Calu3 (cell line): ENCODE measurements at regions of chr15 and their contacts with region 1.

Region 1: DNA sequence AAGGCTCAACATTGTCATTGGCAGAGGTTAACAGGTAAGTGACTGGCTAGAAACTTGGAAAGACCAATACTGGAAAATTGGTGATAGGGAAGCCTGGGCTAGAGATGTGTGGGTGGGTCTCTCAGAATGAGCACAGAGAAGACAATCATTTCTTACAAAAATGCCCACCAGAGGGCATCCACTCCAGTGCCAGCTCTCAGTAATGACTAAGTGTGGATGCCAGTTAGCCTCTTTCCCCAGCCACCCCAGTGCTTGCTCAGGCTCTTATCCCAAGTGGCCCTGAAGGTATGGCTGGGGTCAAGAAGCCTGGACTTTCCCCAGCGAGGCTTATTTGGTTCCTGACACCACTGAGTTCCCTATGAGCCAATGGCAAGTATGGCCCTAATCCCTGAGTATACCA is 115.9 kb upstream of the ST8SIA2 start:
- DNase-seq: peak; percentile 38
- H3K4me3 Mint-ChIP-seq: no peak overlapping the region
- H3K27ac Mint-ChIP-seq: no peak overlapping the region
- H3K4me1 Mint-ChIP-seq: no peaks in the 10 kb centered on the region
- H3K27me3 Mint-ChIP-seq: peaks cover 40% of the 10 kb centered on the region
- CTCF ChIP-seq: peak; percentile 40

Region 2: DNA sequence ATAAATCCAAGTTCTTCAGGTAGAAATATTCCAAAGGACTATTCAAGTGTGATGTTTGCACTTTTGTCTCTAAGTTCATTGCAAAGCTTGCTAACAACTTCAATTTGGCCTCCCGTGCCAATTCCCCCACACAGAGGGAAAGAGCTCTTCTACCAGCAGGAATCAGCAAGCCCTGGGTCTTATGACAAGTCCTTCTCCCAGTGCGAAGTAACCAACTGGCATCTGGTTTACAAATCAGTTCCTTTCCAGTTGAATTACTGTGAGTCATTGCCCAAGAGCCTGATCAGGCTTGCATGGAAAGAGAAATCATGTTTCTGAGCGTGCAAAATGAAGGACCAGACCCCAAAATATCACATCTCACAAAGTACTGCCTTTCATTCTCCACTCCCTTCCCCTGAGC is 486.9 kb before region 1 on chr15:
- CTCF ChIA-PET with region 1: no interaction called
- intact Hi-C with region 1: no loop called
- DNase-seq: no peak
- H3K4me3 Mint-ChIP-seq: no peak overlapping the region
- H3K27ac Mint-ChIP-seq: no peak overlapping the region
- H3K4me1 Mint-ChIP-seq: no peaks in the 10 kb centered on the region
- H3K27me3 Mint-ChIP-seq: peaks cover 25% of the 10 kb centered on the region
- CTCF ChIP-seq: no peak

Region 3: GRCh38 chr15:92247649-92248242 is 30.0 kb before region 1 on chr15:
- CTCF ChIA-PET with region 1: no interaction called
- intact Hi-C with region 1: loop called (anchors 1 kb)
- DNase-seq: no peak
- H3K4me3 Mint-ChIP-seq: no peak overlapping the region
- H3K27ac Mint-ChIP-seq: no peak overlapping the region
- H3K4me1 Mint-ChIP-seq: no peaks in the 10 kb centered on the region
- H3K27me3 Mint-ChIP-seq: peaks cover 51% of the 10 kb centered on the region
- CTCF ChIP-seq: no peak

Region 4: DNA sequence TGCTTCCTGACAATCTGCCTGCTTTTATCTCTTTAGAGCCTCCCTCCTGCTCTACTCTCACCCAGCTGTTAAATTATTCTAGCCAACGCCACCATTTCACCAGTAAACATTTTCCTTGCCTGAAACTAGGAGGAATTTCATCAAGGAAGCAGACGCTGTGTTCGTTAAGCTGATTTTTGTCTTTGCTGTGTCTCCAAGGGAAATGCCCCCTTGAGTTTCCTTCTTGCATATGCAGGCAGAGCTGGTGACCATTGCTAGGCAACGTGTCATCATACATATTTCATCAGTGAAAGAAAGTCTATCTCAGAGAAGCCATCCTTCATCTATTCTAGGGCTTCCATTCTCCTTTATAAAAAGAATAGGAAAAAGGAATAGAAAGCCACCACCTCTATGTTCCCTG is 28.9 kb after region 1 on chr15:
- CTCF ChIA-PET with region 1: interaction called, 10 read pairs
- intact Hi-C with region 1: no loop called
- DNase-seq: no peak
- H3K4me3 Mint-ChIP-seq: no peak overlapping the region
- H3K27ac Mint-ChIP-seq: no peak overlapping the region
- H3K4me1 Mint-ChIP-seq: no peaks in the 10 kb centered on the region
- H3K27me3 Mint-ChIP-seq: peaks cover 39% of the 10 kb centered on the region
- CTCF ChIP-seq: peak; percentile 16

Region 5: DNA sequence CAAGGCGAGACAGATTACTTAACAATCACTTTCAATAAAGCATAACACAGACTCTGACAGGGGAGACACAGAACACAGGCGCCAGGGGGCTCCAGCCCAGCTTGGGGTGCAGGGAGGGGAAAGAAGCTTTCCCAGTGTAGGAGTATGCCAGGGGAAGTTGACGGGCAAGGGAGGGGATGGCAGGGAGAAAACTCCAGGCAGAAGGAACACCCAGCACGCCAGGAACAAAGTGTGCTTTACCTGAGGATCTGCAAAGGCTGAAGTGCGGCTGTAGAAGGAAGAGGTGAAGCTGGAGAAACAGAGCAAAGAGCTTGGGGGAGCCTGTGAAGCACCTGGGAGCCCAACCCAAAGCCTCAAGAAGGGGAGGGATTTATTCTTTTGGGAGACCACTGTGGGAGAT is 799.1 kb after region 1 on chr15:
- CTCF ChIA-PET with region 1: no interaction called
- intact Hi-C with region 1: loop called (anchors 5 kb)
- DNase-seq: no peak
- H3K4me3 Mint-ChIP-seq: no peak overlapping the region
- H3K27ac Mint-ChIP-seq: no peak overlapping the region
- H3K4me1 Mint-ChIP-seq: peaks cover 16% of the 10 kb centered on the region
- H3K27me3 Mint-ChIP-seq: peaks cover 97% of the 10 kb centered on the region
- CTCF ChIP-seq: no peak